Posterior vena cava (tissue), 2 donors: ENCODE measurements at regions of chr2 and their contacts with region 1.

Region 1: GRCh38 chr2:19038071-19039015 is 320.1 kb downstream of the OSR1 start:
- DNase-seq: no peak

Region 2: DNA sequence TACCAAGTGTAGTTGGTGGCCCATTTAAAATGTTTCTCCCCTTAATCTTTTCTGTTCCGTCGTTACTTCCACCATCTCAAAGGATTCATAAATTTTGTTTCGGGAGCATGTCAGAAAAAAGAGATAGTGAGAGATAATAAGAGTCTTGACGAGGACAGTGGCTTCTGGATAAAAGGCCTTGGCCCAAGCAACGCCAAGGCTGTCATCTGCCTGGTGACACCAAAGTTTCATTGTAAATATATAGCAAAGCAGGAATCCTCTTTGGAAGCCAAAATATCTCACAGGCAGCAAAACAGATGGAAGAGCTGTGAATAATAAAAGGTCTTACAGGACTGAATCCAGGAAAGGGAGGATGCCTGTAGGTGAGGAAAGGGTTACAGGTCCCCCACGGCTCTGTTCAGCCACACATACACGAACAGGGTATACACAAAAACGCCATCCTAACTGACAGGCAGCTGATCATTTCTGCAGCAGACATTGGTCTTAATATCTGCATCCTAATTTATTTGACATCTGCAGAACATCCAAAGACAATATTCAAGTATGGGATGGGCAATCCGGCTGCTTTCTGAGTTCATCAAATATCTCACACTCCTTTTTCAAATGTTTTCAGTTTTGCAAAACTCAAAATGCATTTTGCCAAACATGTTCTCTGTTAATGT is 62.7 kb before region 1 on chr2:
- intact Hi-C with region 1: loop called in 1 of 2 experiments (anchors 2 kb)
- DNase-seq: no peak

Region 3: GRCh38 chr2:19020550-19021476 is 17.5 kb before region 1 on chr2:
- intact Hi-C with region 1: no loop called
- DNase-seq: no peak